ENCODE measurements at regions of chr2 and their contacts with region 1.

Region 1: GRCh38 chr2:234463626-234464290 is 33.1 kb downstream of the ARL4C start:
- DNase-seq: peak; percentile 83
- H3K4me3 Mint-ChIP-seq: peak overlapping the region; percentile 72
- H3K27ac Mint-ChIP-seq: peak overlapping the region; percentile 89
- H3K4me1 Mint-ChIP-seq: peaks cover 73% of the 10 kb centered on the region
- H3K27me3 Mint-ChIP-seq: no peaks in the 10 kb centered on the region

Region 2: DNA sequence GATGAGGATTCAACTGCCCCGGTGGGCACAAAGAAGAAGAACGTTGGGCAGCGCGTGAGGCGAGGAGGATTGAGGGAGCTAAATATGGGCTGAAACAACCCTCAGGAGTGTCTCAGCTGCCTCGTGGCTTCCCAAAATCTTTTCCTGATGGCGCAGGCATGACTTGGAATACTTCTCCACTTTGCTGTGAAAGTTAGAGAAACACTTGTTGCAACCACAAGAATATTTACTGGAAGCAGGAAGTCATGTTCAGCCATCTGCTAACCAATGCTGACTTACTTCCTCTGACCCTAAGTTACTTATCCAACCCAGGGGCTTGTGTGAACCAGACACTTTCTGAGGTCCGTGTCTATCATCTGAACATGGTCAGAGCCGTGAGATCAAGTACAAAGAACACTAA is 115.7 kb before region 1 on chr2:
- CTCF ChIA-PET with region 1: no interaction called
- intact Hi-C with region 1: no loop called
- DNase-seq: no peak
- H3K4me3 Mint-ChIP-seq: no peak overlapping the region
- H3K27ac Mint-ChIP-seq: no peak overlapping the region
- H3K4me1 Mint-ChIP-seq: peaks cover 19% of the 10 kb centered on the region
- H3K27me3 Mint-ChIP-seq: no peaks in the 10 kb centered on the region

Region 3: DNA sequence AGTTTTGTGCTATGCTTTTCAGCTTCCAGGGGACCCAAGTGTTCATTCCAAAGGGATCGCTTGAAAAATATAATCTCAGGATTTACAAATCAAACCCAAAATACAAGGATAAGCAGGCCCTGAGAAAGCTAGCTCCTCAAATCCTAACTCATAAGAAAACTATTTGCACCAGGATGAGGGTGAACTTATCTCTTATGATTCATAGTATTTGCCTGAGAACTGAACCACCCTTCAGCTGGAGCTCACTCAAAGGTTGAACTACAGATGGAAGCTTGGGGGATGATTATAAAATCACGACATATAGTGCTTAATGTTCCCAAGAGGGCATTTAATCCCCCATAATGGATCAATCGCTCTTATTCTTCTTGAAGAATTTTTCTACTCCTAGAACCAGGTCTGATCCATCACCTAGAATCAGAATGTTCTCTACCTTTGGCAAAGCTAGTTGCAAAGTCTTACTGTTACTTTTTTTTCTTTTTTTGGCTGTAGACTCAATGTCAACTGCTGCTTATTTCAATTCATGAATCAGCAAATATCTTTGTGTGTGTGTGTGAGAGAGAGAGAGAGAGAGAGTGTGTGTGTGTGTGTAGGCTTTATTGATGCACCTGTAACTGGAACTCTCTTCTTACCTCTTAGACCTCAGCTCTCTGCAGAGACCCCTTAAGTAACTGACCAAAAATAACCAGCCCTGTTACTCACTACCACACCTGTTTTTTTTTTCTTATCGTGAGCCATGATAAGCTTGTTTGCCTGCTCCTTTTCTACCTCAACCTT is 11.7 kb before region 1 on chr2:
- CTCF ChIA-PET with region 1: interaction called, 8 read pairs
- intact Hi-C with region 1: loop called (anchors 1 kb)
- DNase-seq: no peak
- H3K4me3 Mint-ChIP-seq: peak overlapping the region; percentile 78
- H3K27ac Mint-ChIP-seq: peak overlapping the region; percentile 96
- H3K4me1 Mint-ChIP-seq: peaks cover 73% of the 10 kb centered on the region
- H3K27me3 Mint-ChIP-seq: no peaks in the 10 kb centered on the region

Region 4: GRCh38 chr2:234474654-234475053 is 10.9 kb after region 1 on chr2:
- CTCF ChIA-PET with region 1: interaction called, 6 read pairs
- intact Hi-C with region 1: loop called (anchors 1 kb)
- DNase-seq: no peak
- H3K4me3 Mint-ChIP-seq: no peak overlapping the region
- H3K27ac Mint-ChIP-seq: peak overlapping the region; percentile 83
- H3K4me1 Mint-ChIP-seq: peaks cover 45% of the 10 kb centered on the region
- H3K27me3 Mint-ChIP-seq: no peaks in the 10 kb centered on the region

Region 5: DNA sequence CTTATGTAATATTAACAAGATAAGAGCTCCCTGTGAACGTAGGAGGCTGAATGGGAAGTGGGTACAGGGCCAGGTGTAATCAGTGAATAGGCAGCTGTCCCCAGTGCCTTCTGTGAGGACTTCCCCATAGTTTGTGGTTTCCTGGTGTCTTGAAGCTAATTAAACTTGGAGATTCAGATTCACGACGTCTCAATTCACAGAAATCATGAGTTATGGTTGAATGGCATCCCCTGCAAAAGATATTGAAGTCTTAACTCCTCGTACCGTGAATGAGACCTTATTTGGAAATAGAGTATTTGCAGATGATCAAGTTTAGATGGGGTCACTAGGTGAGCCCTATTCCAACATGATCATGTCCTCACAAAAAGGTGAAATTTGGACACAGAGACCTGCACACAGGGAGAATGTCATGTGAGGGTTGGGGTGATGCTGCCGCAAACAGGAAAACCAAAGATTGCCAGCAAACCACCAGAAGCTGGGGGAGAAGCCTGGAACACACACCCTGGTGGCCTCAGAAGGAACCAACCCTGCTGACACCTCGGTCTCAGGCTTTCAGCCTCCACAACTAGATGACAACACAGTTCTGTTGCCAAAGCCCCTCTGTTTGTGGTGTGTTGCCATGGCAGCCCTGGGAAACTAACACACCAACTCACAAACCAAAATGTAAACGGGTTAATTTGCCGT is 20.0 kb after region 1 on chr2:
- CTCF ChIA-PET with region 1: interaction called, 11 read pairs
- intact Hi-C with region 1: loop called (anchors 1 kb)
- DNase-seq: peak; percentile 88
- H3K4me3 Mint-ChIP-seq: peak overlapping the region; percentile 59
- H3K27ac Mint-ChIP-seq: peak overlapping the region; percentile 88
- H3K4me1 Mint-ChIP-seq: peaks cover 78% of the 10 kb centered on the region
- H3K27me3 Mint-ChIP-seq: no peaks in the 10 kb centered on the region

Region 6: DNA sequence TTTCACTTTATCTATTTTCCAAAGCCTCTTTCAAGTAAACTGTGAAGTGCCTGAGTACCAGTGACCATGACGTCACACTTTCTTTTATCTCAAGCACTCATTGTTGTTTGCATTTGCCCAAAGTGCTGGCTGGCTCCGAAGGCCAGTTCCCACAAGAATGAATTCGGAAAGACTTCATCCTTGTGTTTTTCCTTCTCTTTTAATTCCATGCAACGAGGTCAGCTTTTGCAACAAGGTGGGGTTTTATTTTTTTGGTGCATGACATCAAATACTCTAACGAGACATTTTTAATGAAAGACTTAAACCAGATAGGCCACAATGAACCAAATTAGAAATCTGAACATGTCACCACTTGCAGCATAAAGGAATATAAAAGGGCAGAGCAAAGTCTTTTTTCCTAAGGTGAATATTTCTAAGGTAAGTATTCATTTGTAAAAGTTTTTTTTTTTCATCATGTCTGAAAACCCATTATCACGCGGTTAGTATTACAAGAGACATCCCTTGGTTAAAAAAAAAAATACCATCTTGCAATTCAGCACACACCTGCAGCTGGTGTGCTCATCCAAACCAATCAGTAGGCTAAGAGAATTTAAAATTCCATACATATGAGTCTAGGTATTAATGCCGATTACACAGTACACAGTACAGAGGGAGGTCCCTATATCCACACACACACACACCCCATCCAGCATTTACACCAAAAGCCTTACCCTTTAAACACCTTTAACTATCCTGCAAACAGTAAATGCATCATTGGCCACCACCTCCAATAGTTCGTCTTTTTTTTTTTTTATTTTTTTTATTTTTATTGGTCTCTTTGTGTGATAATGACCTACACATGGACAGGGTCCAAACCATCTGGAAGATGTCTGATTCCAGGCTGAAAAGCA is 30.8 kb after region 1 on chr2:
- CTCF ChIA-PET with region 1: interaction called, 7 read pairs
- intact Hi-C with region 1: loop called (anchors 1 kb)
- DNase-seq: no peak
- H3K4me3 Mint-ChIP-seq: peak overlapping the region; percentile 90
- H3K27ac Mint-ChIP-seq: peak overlapping the region; percentile 89
- H3K4me1 Mint-ChIP-seq: peaks cover 48% of the 10 kb centered on the region
- H3K27me3 Mint-ChIP-seq: no peaks in the 10 kb centered on the region